Activated CD4-positive, alpha-beta T cell treated with anti-CD3 and anti-CD28 coated beads, Interleukin-2, amount 10 ng/mL, durations not matched to agents 24 days and 14 days (primary cell): ENCODE measurements at regions of chr17 and their contacts with region 1.

Region 1: GRCh38 chr17:45148183-45149036 is at the start of gene HEXIM1:
- DNase-seq: peak; percentile 100
- H3K4me3 Mint-ChIP-seq: peak within 1 kb of the TSS; percentile 98
- H3K27ac Mint-ChIP-seq: peak within 1 kb of the TSS; percentile 99
- H3K4me1 Mint-ChIP-seq: peaks cover 44% of the 10 kb centered on the region
- H3K27me3 Mint-ChIP-seq: peaks cover 3% of the 10 kb centered on the region
- total RNA-seq, gene HEXIM1: 47.3 and 48.0 TPM in 2 replicates

Region 2: DNA sequence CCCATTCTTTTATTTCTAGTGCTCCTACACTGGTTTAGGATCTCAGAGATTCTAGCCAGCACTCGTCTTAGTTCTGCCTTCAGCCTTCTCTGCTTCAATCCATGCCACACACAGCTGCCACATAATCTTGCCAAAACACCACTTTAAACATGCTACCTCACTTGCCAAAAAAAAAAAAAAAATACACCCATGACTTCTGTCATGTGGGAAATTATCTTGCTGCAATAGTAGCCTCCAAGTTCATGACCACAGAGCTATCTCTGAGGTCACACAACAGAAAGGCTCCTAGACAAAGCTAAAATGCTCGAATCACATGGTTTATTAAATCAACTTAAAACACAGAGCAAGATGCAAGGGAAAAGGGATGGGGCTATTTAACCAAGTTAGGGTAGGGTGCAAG is 573.0 kb before region 1 on chr17:
- intact Hi-C with region 1: no loop called
- DNase-seq: no peak
- H3K4me3 Mint-ChIP-seq: no peak overlapping the region
- H3K27ac Mint-ChIP-seq: no peak overlapping the region
- H3K4me1 Mint-ChIP-seq: no peaks in the 10 kb centered on the region
- H3K27me3 Mint-ChIP-seq: peaks cover 29% of the 10 kb centered on the region

Region 3: GRCh38 chr17:44722254-44722653 is 426.2 kb before region 1 on chr17:
- intact Hi-C with region 1: no loop called
- DNase-seq: no peak
- H3K4me3 Mint-ChIP-seq: no peak overlapping the region
- H3K27ac Mint-ChIP-seq: no peak overlapping the region
- H3K4me1 Mint-ChIP-seq: no peaks in the 10 kb centered on the region
- H3K27me3 Mint-ChIP-seq: no peaks in the 10 kb centered on the region

Region 4: GRCh38 chr17:45135192-45135977 is 13.0 kb before region 1 on chr17 and contains the start of gene ACBD4:
- intact Hi-C with region 1: loop called (anchors 1 kb)
- DNase-seq: peak; percentile 99
- H3K4me3 Mint-ChIP-seq: peak within 1 kb of the TSS; percentile 88
- H3K27ac Mint-ChIP-seq: peak within 1 kb of the TSS; percentile 81
- H3K4me1 Mint-ChIP-seq: peaks cover 8% of the 10 kb centered on the region
- H3K27me3 Mint-ChIP-seq: peaks cover 11% of the 10 kb centered on the region
- total RNA-seq, gene ACBD4: 13.5 and 14.7 TPM in 2 replicates

Region 5: GRCh38 chr17:45172454-45173286 is 24.3 kb after region 1 on chr17:
- intact Hi-C with region 1: loop called (anchors 1 kb)
- DNase-seq: peak; percentile 84
- H3K4me3 Mint-ChIP-seq: peak overlapping the region; percentile 84
- H3K27ac Mint-ChIP-seq: peak overlapping the region; percentile 89
- H3K4me1 Mint-ChIP-seq: peaks cover 19% of the 10 kb centered on the region
- H3K27me3 Mint-ChIP-seq: no peaks in the 10 kb centered on the region

Region 6: DNA sequence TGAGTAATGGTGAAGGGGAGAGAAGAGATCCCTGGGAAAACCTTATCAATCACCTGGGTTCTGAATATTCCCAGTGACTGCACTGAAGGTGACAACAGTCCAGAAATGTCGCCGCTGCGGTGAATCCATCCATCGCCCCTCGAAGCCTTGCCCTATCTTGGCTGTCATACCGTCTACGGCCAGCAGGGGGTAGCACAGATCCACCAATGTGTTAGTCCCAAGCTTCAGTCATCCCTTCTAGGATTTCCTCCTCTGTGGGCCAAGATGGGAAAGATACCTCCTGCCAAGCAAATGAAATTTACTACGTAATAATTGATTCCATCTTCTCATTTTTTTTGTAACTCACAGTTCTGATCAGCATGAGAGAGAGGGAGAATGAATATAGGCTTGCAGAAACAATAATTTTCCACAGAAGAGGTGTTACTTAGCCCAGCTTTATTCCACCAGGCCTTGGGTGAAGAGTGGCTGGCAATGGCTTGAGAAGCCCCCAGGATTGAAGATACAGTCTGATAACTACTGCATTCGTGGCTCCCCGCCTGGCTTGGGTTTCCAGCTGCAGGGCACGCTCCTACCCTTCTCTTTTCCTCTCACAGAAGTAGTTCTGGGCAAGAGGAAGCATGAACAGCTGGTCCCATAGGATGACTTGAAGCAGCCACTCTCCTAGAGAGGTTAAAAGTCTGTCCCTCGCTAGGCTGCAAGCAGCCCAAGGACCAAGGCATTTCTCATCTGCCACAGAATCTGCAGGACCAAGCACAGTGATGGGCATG is 70.7 kb after region 1 on chr17:
- intact Hi-C with region 1: loop called (anchors 2 kb)
- DNase-seq: peak; percentile 96
- H3K4me3 Mint-ChIP-seq: peak overlapping the region; percentile 84
- H3K27ac Mint-ChIP-seq: peak overlapping the region; percentile 76
- H3K4me1 Mint-ChIP-seq: peaks cover 38% of the 10 kb centered on the region
- H3K27me3 Mint-ChIP-seq: no peaks in the 10 kb centered on the region

Region 7: GRCh38 chr17:45317112-45317928 is 168.9 kb after region 1 on chr17:
- intact Hi-C with region 1: loop called (anchors 2 kb)
- DNase-seq: peak; percentile 100
- H3K4me3 Mint-ChIP-seq: peak overlapping the region; percentile 90
- H3K27ac Mint-ChIP-seq: peak overlapping the region; percentile 96
- H3K4me1 Mint-ChIP-seq: peaks cover 67% of the 10 kb centered on the region
- H3K27me3 Mint-ChIP-seq: peaks cover 3% of the 10 kb centered on the region